ENCODE measurements at regions of chr2 and their contacts with region 1.

Region 1: DNA sequence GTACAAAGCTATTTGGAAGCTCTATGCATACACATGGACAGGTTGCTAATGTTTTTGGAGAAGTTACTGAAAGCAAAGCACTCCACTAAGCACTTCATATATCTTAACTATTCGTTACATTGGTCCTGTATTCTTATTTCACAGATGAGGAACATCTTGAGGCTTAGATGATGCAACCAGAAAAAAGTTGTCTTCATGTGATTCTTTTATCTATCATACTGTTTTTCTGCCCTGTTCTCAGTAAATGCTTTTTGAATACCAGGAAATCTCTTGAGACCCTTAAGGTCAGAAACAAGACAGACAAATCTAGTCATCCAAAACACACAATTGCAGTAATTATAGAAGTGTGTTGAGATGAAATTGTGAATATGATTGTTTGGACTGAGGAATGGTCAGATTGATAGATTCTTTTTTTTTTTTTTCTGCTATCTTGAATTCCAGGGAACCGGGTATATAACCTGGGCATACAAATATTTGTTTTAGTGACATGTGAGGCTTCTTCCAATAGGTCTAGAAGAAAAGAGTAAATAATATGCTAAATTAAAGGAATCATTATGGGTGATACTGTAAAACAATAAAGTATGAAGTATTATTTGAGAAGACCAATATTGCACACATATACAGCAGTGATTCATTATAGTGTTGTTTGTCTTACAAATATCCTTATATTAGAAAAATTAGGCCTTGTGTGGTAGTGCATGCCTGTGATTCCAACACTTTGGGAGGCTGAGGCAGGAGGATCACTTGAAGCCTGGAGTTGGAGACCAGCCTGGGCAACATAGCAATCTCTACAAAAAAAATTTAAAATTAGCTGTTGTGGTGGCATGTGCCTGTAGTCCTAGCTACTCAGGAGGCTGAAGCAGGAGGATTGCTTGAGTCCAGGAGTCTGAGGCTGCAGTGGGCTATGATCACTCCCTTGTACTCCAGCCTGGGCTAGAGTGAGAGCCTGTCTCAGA is 33.7 kb downstream of the EHBP1 start:
- DNase-seq: no peak
- ATAC-seq: no peak
- H3K4me3 ChIP-seq: no peak overlapping the region
- H3K27ac ChIP-seq: no peak overlapping the region; the same call in 1 of the 2 replicates
- H3K4me1 ChIP-seq: no peaks in the 10 kb centered on the region; the same call in 1 of the 2 replicates
- H3K27me3 ChIP-seq: no peaks in the 10 kb centered on the region
- CTCF ChIP-seq: no peak

Region 2: GRCh38 chr2:61949714-61950560 is 789.3 kb before region 1 on chr2:
- CTCF ChIA-PET with region 1: no interaction called
- POLR2A ChIA-PET with region 1: no interaction called
- in situ Hi-C with region 1: no loop called
- intact Hi-C with region 1: no loop called
- DNase-seq: no peak
- ATAC-seq: no peak
- H3K4me3 ChIP-seq: no peak overlapping the region
- H3K27ac ChIP-seq: no peak overlapping the region; the same call in 1 of the 2 replicates
- H3K4me1 ChIP-seq: peaks cover 24% of the 10 kb centered on the region
- H3K27me3 ChIP-seq: no peaks in the 10 kb centered on the region
- CTCF ChIP-seq: no peak

Region 3: DNA sequence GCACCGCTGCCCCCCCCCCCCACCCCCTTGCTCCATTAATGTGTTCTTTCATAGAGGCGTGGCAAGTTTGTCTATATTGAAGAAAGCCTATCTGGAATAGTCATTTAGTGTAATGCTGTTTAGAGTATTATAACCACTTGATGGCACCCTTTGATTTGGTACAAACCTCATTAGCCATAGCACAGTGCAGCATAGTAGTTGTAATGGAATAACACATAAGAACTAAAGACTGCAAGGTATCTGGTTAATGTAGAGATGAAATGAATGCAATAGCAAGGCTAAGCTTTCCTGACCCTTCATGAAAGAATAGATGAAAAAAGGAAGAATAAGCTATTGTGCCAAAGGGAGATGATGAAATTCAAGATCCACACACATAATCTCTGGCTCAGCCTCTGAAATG is 48.1 kb after region 1 on chr2:
- CTCF ChIA-PET with region 1: no interaction called
- POLR2A ChIA-PET with region 1: no interaction called
- in situ Hi-C with region 1: no loop called
- intact Hi-C with region 1: no loop called
- DNase-seq: peak; percentile 24
- ATAC-seq: peak; percentile 86
- H3K4me3 ChIP-seq: no peak overlapping the region
- H3K27ac ChIP-seq: no peak overlapping the region
- H3K4me1 ChIP-seq: peaks cover 12% of the 10 kb centered on the region; the same call in 1 of the 2 replicates
- H3K27me3 ChIP-seq: no peaks in the 10 kb centered on the region
- CTCF ChIP-seq: peak; percentile 61

Region 4: GRCh38 chr2:63588385-63589147 is 849.3 kb after region 1 on chr2 and contains the starts of genes MDH1 and WDPCP:
- CTCF ChIA-PET with region 1: no interaction called
- POLR2A ChIA-PET with region 1: no interaction called
- in situ Hi-C with region 1: no loop called
- intact Hi-C with region 1: loop called (anchors 5 kb)
- DNase-seq: peak; percentile 98
- ATAC-seq: peak; percentile 97
- H3K4me3 ChIP-seq: peak within 1 kb of the TSS; percentile 96 to 99
- H3K27ac ChIP-seq: peak within 1 kb of the TSS; percentile 96
- H3K4me1 ChIP-seq: peaks cover 30% of the 10 kb centered on the region
- H3K27me3 ChIP-seq: no peaks in the 10 kb centered on the region
- CTCF ChIP-seq: no peak
- total RNA-seq, gene MDH1: 200 TPM
- total RNA-seq, gene WDPCP: 7.4 TPM